ENCODE measurements at regions of chr14 and their contacts with region 1.

Region 1: DNA sequence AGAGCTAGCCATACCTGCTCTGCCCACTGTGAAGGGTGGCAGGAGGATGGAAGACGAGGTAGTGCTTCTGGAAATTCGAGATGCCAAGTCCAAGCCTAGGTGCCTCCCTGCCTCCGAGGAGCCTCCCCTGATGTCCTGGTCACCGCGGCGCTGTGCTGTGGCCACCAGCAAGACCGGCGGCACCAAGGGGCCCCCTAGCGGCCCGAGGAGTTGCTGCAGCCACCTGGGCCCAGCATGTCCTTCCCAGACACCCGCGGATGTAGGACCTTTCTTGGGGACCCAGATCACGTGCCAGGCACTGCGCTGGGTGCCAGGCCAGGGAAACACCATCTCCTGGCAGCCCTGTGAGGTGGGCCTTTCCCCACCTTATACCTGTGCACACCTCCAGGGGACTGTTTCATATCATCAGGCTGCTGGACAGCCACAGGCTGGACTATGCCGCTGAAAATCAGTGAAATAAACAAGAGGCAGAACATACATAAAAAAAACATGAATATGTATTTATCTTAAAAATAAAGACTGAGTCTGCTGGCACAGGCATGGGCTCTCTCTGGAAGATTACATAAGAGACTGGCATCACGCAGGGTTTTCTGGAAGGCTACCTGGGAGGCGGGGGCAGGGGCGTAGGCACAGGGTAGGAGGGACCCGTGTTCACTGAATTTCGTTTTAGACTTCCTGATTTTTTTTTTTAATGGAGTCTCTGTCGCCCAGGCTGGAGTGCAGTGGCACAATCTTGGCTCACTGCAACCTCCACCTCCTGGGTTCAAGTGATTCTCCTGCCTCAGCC is 15.9 kb upstream of the HHIPL1 start:
- DNase-seq: peak; percentile 77
- H3K4me3 Mint-ChIP-seq: no peak overlapping the region
- H3K27ac Mint-ChIP-seq: no peak overlapping the region
- H3K4me1 Mint-ChIP-seq: peaks cover 5% of the 10 kb centered on the region
- H3K27me3 Mint-ChIP-seq: peaks cover 13% of the 10 kb centered on the region

Region 2: DNA sequence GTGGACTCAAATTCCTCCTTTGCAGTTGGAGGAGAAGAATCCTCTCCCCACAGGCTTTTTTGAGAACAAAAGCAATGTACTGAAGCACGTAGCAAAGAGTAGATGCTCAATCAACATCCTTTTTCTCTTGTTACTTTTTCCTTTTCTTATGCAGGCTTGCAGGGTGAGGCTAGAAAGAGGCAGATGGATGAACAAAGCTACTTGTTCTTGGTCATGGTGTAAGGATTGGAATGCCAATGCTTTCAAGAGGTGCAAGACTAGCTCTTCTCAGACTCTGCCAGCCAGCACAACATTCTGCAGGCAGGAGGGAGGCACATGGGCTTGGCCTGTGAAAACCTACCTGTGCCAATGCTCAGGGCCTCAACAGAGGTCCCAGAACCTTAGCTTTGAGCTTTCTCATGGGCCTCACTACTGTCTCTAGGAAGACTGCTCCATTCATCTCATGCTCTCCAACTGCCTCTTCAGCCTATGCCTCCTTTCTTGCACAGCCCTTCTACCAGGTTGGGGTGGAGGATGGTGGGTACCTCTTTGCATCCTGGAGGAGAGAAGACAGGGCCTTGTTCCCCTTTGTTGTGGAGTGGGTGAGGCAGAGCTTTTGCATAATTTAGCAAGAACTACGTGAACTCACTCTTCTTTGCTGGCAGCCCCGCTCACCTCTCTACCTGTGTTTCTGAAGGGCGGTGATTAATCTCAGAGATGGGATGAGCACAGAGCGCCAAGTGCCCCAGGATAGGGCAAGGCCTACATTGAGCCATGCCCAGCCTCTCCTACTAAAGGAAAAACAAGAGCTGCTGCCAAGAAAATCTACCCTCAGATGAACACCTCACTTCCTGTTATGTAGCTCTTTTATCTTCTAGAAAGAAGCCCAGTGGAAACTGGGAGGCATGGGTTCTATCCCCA is 1712.1 kb before region 1 on chr14:
- CTCF ChIA-PET with region 1: no interaction called
- POLR2A ChIA-PET with region 1: no interaction called
- intact Hi-C with region 1: no loop called
- DNase-seq: no peak
- H3K4me3 Mint-ChIP-seq: no peak overlapping the region
- H3K27ac Mint-ChIP-seq: no peak overlapping the region
- H3K4me1 Mint-ChIP-seq: peaks cover 14% of the 10 kb centered on the region
- H3K27me3 Mint-ChIP-seq: no peaks in the 10 kb centered on the region

Region 3: DNA sequence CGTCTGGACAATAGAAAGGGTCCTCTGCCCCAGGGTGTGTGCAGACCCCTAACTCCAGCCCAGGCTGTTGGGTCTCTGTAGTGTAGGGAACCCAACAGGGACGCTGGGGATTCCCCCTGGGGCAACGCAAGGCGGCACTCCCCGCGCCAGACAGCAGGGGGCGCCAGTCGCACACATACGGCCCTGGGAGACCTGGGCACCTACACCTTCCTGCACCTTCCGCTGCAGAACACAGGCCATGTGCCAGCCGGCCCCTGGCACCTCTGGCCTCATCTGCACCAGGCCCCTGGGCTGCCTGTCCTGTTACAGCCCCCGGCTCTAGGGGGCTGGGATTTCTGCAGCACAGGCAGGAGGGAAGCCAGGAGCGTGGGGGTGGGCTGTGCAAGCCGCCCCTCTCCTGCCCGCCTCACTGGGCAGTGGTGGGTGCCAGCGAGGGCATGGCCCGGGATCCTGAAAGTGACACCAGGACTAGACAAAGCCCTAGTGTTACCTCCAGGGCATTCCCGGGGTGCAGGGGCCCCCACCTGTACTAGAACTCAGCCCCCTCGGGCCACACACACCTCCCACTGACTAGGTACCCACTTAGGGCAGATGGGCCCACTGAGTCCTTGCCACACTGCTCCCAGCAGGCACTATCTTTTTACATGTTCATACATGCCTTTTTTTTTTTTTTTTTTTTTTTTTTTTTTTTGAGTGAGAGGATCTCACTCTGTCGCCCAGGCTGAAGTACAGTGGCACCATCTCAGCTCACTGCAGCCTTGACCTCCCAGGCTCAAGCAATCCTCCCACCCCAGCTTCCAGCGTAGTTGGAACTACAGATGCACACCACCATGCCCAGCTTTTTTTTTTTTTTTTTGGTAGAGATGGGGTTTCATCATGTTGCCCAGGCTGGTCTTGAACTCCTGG is 110.3 kb before region 1 on chr14:
- CTCF ChIA-PET with region 1: interaction called, 12 read pairs
- POLR2A ChIA-PET with region 1: no interaction called
- intact Hi-C with region 1: loop called (anchors 1 kb)
- DNase-seq: peak; percentile 88
- H3K4me3 Mint-ChIP-seq: no peak overlapping the region
- H3K27ac Mint-ChIP-seq: no peak overlapping the region
- H3K4me1 Mint-ChIP-seq: no peaks in the 10 kb centered on the region
- H3K27me3 Mint-ChIP-seq: no peaks in the 10 kb centered on the region